ENCODE measurements at regions of chr13 and their contacts with region 1.

Region 1: DNA sequence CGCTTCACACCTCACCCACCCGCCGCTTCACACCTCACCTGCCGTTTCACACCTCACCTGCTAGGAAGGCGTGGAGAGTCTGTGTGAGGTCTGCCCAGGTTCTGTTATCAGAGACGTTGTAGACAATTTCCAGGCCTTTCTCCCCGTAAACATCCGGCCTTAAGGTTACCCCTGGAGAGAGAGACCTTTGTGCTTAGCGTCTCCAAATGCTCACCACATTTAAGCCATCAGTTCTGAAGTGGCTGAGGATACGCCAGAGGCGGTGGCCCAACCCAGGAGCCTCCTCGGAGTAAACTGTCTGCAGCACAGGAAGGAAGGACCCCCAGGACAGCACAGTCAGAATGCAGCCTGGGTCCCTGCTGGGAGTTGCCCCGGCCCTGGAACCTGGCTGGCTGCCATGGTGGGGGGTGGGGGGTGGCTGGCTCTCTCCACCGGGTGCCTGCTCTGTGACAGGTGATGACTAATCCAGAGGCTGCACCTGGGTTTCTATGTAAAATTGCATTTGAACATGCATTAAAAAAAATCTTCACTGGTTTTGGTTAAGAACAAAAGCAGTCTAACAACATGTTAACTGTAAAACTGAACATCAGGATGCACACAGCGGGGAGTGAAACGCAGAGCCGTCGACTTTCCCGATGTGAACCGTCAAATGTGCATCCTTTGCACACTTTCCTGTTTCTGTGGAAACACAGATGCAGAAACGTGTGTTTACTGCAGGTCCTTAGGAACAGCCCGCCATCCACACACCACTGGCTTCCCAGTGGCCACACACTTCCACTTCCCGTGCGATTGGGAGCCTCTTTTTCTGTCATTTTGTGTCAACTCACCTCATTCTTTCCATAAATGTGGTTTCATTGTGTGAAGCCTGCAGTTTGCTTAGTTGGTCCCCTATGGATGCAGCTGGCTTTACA is 4.5 kb downstream of the ATP4B start:
- DNase-seq: peak in 1 of 4 experiments; percentile 18
- ATAC-seq: no peak
- H3K4me3 ChIP-seq: no peak overlapping the region
- H3K27ac ChIP-seq: no peak overlapping the region
- H3K4me1 ChIP-seq: peaks cover 0 to 15% of the 10 kb centered on the region in 2 experiments; a peak in 2 of 5 replicates
- H3K27me3 ChIP-seq: peaks cover 18 to 70% of the 10 kb centered on the region in 2 experiments
- CTCF ChIP-seq: no peak
- EP300 ChIP-seq: no peak
- POLR2A ChIP-seq: no peak
- RAD21 ChIP-seq: no peak

Region 2: DNA sequence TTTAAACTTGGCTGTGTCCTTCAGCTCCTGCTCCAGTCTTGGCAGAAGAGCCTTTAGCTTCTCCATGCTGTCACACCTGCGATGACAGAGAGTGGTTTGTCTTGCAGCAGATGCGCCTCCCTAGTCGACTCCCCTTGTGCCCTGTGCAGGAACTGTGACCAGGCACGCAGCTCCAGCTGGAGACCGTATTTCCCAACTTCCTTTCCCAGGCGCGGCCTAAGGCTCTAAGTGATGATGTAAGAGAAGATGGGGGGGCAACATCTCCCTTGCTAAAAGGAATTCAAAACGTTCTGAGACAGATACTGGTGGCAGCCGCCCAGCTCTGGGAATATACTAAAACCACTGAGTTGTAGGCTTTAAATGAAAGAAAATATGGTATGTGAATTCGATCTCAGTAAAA is 179.3 kb before region 1 on chr13:
- CTCF ChIA-PET with region 1: no interaction called
- POLR2A ChIA-PET with region 1: no interaction called
- in situ Hi-C with region 1: no loop called
- intact Hi-C with region 1: no loop called
- DNase-seq: no peak
- ATAC-seq: no peak
- H3K4me3 ChIP-seq: no peak overlapping the region
- H3K27ac ChIP-seq: no peak overlapping the region
- H3K4me1 ChIP-seq: no peaks in the 10 kb centered on the region
- H3K27me3 ChIP-seq: no peaks in the 10 kb centered on the region
- CTCF ChIP-seq: no peak
- EP300 ChIP-seq: no peak
- POLR2A ChIP-seq: no peak
- RAD21 ChIP-seq: no peak

Region 3: DNA sequence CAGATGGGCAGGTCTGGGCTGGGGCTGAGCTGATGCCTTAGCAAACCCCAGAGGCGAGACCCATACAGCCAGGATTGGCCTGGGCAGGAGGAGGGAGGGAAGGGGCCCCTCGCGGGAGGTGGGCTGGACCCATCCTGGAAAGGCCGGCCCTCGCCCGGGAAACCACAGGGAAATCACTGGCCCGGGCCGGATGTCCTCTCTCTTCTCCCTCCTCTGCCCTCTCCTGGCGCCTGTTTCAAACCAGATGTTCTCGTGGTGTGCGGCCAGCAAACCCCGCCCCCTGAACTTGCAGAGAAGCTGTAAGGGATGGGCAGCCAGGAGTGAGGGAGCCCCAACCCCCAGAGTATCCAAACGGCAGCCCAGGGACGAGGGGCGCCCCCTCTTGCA is 148.6 kb after region 1 on chr13:
- CTCF ChIA-PET with region 1: no interaction called
- POLR2A ChIA-PET with region 1: no interaction called
- in situ Hi-C with region 1: loop called (anchors 5 kb)
- intact Hi-C with region 1: no loop called
- DNase-seq: peak; percentile 19 to 27 (median 24)
- ATAC-seq: peak; percentile 81
- H3K4me3 ChIP-seq: no peak overlapping the region
- H3K27ac ChIP-seq: no peak overlapping the region
- H3K4me1 ChIP-seq: peaks cover 0 to 29% of the 10 kb centered on the region in 2 experiments; a peak in 2 of 5 replicates
- H3K27me3 ChIP-seq: peaks cover 8 to 66% of the 10 kb centered on the region in 2 experiments; a peak in 4 of 5 replicates
- CTCF ChIP-seq: no peak
- EP300 ChIP-seq: no peak
- POLR2A ChIP-seq: no peak
- RAD21 ChIP-seq: no peak

Region 4: GRCh38 chr13:113916330-113916815 is 262.9 kb after region 1 on chr13:
- CTCF ChIA-PET with region 1: no interaction called
- POLR2A ChIA-PET with region 1: no interaction called
- in situ Hi-C with region 1: loop called (anchors 10 kb)
- intact Hi-C with region 1: no loop called
- DNase-seq: no peak
- ATAC-seq: no peak
- H3K4me3 ChIP-seq: no peak overlapping the region
- H3K27ac ChIP-seq: no peak overlapping the region
- H3K4me1 ChIP-seq: peaks cover 0 to 9% of the 10 kb centered on the region in 2 experiments; a peak in 2 of 5 replicates
- H3K27me3 ChIP-seq: peaks cover 24 to 73% of the 10 kb centered on the region in 2 experiments; a peak in 4 of 5 replicates
- CTCF ChIP-seq: no peak
- EP300 ChIP-seq: no peak
- POLR2A ChIP-seq: no peak
- RAD21 ChIP-seq: no peak

Region 5: GRCh38 chr13:114279758-114280355 is 626.3 kb after region 1 on chr13:
- CTCF ChIA-PET with region 1: no interaction called
- POLR2A ChIA-PET with region 1: no interaction called
- in situ Hi-C with region 1: no loop called
- intact Hi-C with region 1: no loop called
- DNase-seq: peak in 1 of 4 experiments; percentile 33
- ATAC-seq: no peak
- H3K4me3 ChIP-seq: no peak overlapping the region
- H3K27ac ChIP-seq: peak overlapping the region; percentile 99
- H3K4me1 ChIP-seq: peaks cover 31 to 35% of the 10 kb centered on the region in 2 experiments
- H3K27me3 ChIP-seq: no peaks in the 10 kb centered on the region
- CTCF ChIP-seq: no peak
- EP300 ChIP-seq: no peak
- POLR2A ChIP-seq: no peak
- RAD21 ChIP-seq: no peak

Measured in K562 (cell line).